Panc1 (cell line): ENCODE measurements at regions of chr12 and their contacts with region 1.

Region 1: GRCh38 chr12:122752464-122753318 is at the start of gene DENR:
- DNase-seq: peak; percentile 94
- ATAC-seq: peak; percentile 97
- H3K4me3 ChIP-seq: peak within 1 kb of the TSS; percentile 91 to 98
- H3K27ac ChIP-seq: peak within 1 kb of the TSS; percentile 98
- H3K4me1 ChIP-seq: peaks cover 12% of the 10 kb centered on the region
- H3K27me3 ChIP-seq: no peaks in the 10 kb centered on the region
- CTCF ChIP-seq: peak; percentile 92
- total RNA-seq, gene DENR: 68.7 TPM

Region 2: DNA sequence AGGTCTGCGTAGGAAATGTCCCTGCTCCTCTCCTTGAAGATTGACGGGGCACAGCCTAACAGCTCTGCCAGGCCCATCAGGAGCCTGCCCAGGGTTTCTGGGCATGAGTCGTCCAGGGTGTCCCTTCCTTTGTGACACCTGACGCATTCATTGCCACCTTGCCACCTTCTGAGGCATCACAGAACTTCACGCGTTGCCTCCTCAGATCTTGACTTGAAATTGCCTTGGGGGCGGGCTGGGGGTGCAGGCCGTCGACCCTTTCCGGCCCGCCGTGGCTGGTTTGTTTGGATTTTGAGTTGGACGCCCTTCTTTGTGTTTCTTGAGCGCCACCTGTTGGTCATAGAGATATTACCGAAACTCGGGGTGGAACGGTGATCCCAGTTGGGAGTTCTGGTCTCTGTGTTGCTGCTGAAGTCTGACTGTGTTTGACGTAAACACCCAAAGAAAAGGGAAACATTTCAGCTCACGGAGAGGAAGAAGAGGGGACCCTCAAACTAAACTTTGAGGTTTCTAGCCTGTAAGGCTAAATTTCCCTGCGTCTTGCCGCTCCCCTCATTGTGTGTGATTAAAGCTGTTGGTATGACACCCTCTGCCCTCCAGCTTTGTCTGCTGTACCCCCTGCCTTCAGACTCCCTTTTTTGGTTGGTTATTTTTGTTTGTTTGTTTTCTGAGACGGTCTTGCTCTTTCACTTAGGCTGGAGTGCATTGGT is 629.5 kb before region 1 on chr12:
- CTCF ChIA-PET with region 1: no interaction called
- POLR2A ChIA-PET with region 1: no interaction called
- in situ Hi-C with region 1: no loop called
- intact Hi-C with region 1: no loop called
- DNase-seq: no peak
- ATAC-seq: peak; percentile 79
- H3K4me3 ChIP-seq: no peak overlapping the region
- H3K27ac ChIP-seq: peak overlapping the region; percentile 87
- H3K4me1 ChIP-seq: peaks cover 58% of the 10 kb centered on the region
- H3K27me3 ChIP-seq: no peaks in the 10 kb centered on the region
- CTCF ChIP-seq: peak; percentile 85

Region 3: DNA sequence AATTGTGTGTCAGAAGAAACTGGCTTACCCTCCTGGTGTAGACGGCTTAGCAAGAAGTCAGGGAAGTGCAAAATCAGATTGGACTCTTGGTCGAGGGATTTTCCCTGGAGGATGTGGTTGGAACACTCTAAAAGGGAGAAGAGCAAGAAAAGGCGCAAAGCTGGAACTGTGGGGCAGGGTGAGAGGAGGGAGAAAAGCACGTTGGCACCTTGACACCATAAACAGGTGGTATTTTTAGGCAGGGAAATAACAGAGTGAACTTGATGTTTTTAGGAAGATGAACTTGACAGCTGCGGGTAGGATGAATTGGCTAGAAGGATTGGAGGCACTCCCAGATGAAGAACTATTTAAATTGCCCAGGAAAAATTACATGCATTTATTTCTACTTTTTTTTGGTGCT is 117.2 kb before region 1 on chr12:
- CTCF ChIA-PET with region 1: no interaction called
- POLR2A ChIA-PET with region 1: no interaction called
- in situ Hi-C with region 1: no loop called
- intact Hi-C with region 1: loop called (anchors 5 kb)
- DNase-seq: no peak
- ATAC-seq: no peak
- H3K4me3 ChIP-seq: no peak overlapping the region
- H3K27ac ChIP-seq: no peak overlapping the region
- H3K4me1 ChIP-seq: no peaks in the 10 kb centered on the region
- H3K27me3 ChIP-seq: no peaks in the 10 kb centered on the region
- CTCF ChIP-seq: no peak